ENCODE measurements at regions of chr15 and their contacts with region 1.

Region 1: GRCh38 chr15:48536681-48537091 is 108.8 kb downstream of the FBN1 start:
- DNase-seq: no peak
- H3K4me3 ChIP-seq: no peak overlapping the region
- H3K27ac ChIP-seq: peak overlapping the region; percentile 69
- H3K4me1 ChIP-seq: peaks cover 44% of the 10 kb centered on the region
- H3K27me3 ChIP-seq: no peaks in the 10 kb centered on the region
- CTCF ChIP-seq: no peak

Region 2: DNA sequence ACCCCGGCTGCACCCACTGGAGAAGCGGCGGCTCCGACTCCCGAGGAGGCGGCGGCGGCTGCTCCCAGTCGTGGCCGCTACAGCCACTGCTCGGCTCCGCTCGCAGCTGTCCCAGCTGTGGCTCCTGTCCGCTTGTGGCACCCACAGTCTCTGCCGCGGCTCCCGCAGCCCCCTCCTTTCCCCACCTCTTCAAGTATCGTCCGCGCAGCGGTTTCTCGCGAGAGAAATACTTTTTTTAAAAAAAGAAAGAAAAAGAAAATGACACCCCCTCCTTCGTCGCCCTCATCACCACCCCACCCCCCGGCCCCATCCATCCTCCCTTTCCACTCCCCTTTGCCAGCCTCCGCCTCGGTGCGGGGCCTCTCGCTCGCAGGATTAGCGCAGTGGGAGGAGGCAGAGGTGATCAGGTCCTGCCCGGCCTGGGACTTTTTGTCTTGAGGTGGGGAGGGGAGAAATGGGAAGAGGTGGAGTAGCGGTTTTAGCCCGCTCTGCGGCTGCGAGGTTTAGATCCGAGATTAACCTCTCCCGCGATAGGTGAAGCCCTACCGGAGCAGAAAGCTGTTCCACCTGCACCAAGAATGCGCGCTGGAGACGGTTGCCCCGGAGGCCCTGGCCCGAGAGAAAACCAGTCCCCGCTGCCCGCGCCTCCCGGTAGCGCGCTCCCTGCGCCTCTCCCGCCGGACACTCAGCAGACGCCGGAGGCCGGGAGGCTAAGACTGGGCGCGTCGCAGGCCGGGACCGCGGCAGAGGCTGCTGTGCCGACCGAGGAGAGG is 109.1 kb after region 1 on chr15 and contains the start of gene FBN1:
- intact Hi-C with region 1: loop called (anchors 10 kb)
- DNase-seq: peak; percentile 71
- H3K4me3 ChIP-seq: peak within 1 kb of the TSS; percentile 97
- H3K27ac ChIP-seq: peak within 1 kb of the TSS; percentile 92
- H3K4me1 ChIP-seq: peaks cover 60% of the 10 kb centered on the region
- H3K27me3 ChIP-seq: peaks cover 29% of the 10 kb centered on the region
- CTCF ChIP-seq: no peak
- total RNA-seq, gene FBN1: 45.5 TPM

Measured in left ventricle myocardium inferior (tissue), 1 donor.